Activated T-helper 1 cell treated with anti-CD3 and anti-CD28 coated beads, Interleukin-12 subunit alpha, Interleukin-12 subunit beta, Interleukin-2, Interleukin-4 antibody, amounts not matched to agents 30 ng/mL and 10 ng/mL and 1 ng/mL, durations not matched to agents 14 hours and 24 hours and 36 hours (primary cell): ENCODE measurements at regions of chr10 and their contacts with region 1.

Region 1: DNA sequence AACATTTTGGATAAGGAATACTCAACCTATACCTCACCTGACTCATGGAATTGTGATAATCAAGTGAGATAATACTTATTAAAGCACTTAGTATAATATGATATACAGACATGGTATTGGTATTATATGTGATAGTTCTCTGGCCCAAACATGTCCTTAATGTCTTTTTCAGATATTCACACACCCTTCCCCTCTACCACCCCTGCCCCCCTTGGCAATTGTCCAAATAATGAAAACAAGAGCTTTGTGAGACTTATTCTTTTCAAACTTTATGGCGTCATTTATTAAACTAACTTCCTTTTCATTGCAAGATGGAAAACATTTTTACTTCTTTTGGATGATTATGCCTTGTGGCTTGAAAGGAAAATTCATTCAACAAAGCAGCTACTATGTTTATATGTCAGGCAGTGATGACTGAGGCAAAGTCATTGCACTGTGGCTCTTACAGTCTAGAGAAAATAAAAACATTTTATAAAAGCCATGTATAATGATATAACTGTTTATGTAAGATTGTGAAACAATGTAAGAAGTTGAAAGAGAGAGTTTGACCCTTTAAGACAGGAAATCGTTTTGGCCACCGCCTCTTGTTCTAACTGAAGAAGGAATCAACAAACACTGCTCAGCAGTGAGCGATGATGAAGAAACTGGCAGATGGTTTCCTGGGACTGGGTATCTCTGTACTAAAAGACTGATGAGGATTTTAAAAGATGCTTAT is 27.4 kb downstream of the MINPP1 start:
- DNase-seq: no peak
- H3K4me3 Mint-ChIP-seq: no peak overlapping the region
- H3K27ac Mint-ChIP-seq: no peak overlapping the region
- H3K4me1 Mint-ChIP-seq: peaks cover under 1% of the 10 kb centered on the region
- H3K27me3 Mint-ChIP-seq: no peaks in the 10 kb centered on the region

Region 2: DNA sequence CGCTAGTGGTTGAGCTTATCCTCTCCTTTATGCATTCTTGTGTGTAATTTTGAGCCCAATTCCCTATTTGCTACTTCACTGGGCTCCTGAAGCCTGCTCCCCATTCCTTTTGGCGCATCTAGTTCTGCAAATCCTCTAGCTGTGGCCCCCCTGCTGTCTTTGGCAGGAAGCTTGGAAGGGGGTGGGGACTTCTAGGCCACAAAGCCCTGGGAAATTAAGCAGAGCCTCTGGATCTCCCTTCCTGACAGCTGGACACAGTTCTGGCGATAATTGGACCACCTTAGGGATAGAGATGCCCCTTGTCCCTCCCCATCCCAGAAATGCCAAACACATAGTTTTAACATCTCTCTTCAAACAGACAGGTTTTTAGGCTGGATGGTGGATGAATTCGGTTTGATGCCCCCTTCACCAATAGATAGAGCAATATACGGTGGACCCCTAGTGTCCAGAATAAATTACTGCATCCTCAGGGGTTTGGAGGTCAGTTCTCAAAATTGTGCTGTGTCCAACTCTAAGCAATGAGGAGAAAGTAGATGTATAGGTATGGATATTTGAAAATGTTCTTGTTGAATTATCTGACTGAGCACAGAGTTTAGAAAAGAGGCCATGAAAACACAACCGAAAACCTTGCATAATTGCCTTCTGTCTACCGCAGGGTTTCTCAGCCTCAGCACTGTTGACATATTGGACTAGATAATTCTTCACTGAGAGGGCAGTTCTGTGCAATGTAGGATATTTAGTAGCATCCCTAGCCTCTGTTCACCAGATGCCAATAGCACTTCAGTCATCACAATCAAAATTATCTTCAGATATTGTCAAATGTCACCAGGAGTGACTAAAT is 203.1 kb after region 1 on chr10:
- intact Hi-C with region 1: loop called (anchors 1 kb)
- DNase-seq: no peak
- H3K4me3 Mint-ChIP-seq: no peak overlapping the region
- H3K27ac Mint-ChIP-seq: no peak overlapping the region
- H3K4me1 Mint-ChIP-seq: no peaks in the 10 kb centered on the region
- H3K27me3 Mint-ChIP-seq: peaks cover 18% of the 10 kb centered on the region

Region 3: GRCh38 chr10:87771871-87772500 is 239.9 kb after region 1 on chr10:
- intact Hi-C with region 1: loop called (anchors 1 kb)
- DNase-seq: no peak
- H3K4me3 Mint-ChIP-seq: no peak overlapping the region
- H3K27ac Mint-ChIP-seq: no peak overlapping the region
- H3K4me1 Mint-ChIP-seq: peaks cover 5% of the 10 kb centered on the region
- H3K27me3 Mint-ChIP-seq: no peaks in the 10 kb centered on the region